CD4-positive, alpha-beta T cell (primary cell): ENCODE measurements at regions of chr9 and their contacts with region 1.

Region 1: DNA sequence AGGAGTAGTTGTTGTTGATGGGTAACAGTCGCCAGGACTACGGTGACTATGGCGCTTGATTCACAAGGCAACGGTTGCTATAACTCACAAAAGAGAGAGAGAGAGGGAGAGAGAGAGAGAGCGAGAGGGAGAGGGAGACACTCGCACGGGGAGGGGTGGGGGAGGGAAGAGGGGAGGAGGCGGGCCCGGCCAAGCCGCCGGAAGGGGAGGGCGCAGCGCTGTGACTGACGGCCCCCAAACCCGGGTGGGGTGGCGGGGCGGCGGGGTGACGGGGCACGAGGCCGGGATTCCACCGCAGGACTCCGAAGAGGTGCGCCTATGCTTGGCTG is at the start of gene RFX3:
- DNase-seq: peak; percentile 88 to 98 (median 92)
- ATAC-seq: peak; percentile 55
- H3K4me3 ChIP-seq: peak within 1 kb of the TSS; percentile 82
- H3K4me3 Mint-ChIP-seq: peak within 1 kb of the TSS; percentile 91
- H3K27ac ChIP-seq: peak within 1 kb of the TSS; percentile 100
- H3K27ac Mint-ChIP-seq: peak within 1 kb of the TSS; percentile 99
- H3K4me1 ChIP-seq: peaks cover 24% of the 10 kb centered on the region
- H3K4me1 Mint-ChIP-seq: peaks cover 74% of the 10 kb centered on the region
- H3K27me3 ChIP-seq: no peaks in the 10 kb centered on the region
- H3K27me3 Mint-ChIP-seq: peaks cover 5% of the 10 kb centered on the region
- CTCF ChIP-seq: no peak
- total RNA-seq, gene RFX3: 22.9 to 24.8 TPM

Region 2: DNA sequence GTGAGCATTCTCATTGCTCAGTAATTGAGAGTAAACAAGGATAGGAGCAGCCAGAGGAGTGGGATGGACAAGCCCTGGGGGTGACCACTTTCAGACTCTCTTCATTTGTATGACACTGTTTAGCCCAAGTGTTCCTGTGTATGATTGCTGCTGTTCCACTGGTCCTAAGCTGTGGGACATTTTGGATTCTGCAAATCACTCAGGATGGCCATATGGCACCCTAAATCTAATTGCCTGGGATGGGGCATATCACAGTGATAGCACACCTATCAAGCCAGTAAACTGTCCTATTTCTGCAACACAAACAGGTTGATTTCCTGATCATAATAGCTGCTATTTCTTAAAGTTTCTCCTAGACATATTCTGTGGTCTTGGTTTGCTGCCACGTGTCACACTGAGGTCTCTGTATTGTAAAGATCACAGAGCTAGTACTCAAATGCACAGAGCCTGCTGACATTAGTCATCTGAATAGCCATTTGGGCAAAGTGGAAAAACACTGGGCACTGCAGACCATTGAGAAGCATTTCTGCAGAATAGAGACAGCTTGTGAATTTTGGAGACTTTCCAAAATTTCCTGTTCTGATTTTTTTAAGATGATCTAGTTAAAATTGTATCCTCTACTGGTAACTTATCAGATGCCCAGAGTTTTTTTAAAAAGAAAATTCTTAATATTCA is 320.2 kb before region 1 on chr9:
- CTCF ChIA-PET with region 1: no interaction called
- POLR2A ChIA-PET with region 1: no interaction called
- intact Hi-C with region 1: no loop called
- DNase-seq: no peak
- ATAC-seq: no peak
- H3K4me3 ChIP-seq: no peak overlapping the region
- H3K4me3 Mint-ChIP-seq: no peak overlapping the region
- H3K27ac ChIP-seq: no peak overlapping the region
- H3K27ac Mint-ChIP-seq: no peak overlapping the region
- H3K4me1 ChIP-seq: no peaks in the 10 kb centered on the region
- H3K4me1 Mint-ChIP-seq: no peaks in the 10 kb centered on the region
- H3K27me3 ChIP-seq: no peaks in the 10 kb centered on the region
- H3K27me3 Mint-ChIP-seq: peaks cover 10% of the 10 kb centered on the region
- CTCF ChIP-seq: no peak

Region 3: GRCh38 chr9:3441197-3441816 is 84.5 kb before region 1 on chr9:
- CTCF ChIA-PET with region 1: interaction called, 5 read pairs
- POLR2A ChIA-PET with region 1: interaction called, 11 read pairs
- intact Hi-C with region 1: no loop called
- DNase-seq: peak in 13 of 14 experiments; percentile 7 to 72 (median 29)
- ATAC-seq: peak; percentile 88
- H3K4me3 ChIP-seq: no peak overlapping the region
- H3K4me3 Mint-ChIP-seq: no peak overlapping the region
- H3K27ac ChIP-seq: no peak overlapping the region
- H3K27ac Mint-ChIP-seq: no peak overlapping the region
- H3K4me1 ChIP-seq: no peaks in the 10 kb centered on the region
- H3K4me1 Mint-ChIP-seq: peaks cover 12% of the 10 kb centered on the region
- H3K27me3 ChIP-seq: no peaks in the 10 kb centered on the region
- H3K27me3 Mint-ChIP-seq: no peaks in the 10 kb centered on the region
- CTCF ChIP-seq: peak; percentile 62

Region 4: DNA sequence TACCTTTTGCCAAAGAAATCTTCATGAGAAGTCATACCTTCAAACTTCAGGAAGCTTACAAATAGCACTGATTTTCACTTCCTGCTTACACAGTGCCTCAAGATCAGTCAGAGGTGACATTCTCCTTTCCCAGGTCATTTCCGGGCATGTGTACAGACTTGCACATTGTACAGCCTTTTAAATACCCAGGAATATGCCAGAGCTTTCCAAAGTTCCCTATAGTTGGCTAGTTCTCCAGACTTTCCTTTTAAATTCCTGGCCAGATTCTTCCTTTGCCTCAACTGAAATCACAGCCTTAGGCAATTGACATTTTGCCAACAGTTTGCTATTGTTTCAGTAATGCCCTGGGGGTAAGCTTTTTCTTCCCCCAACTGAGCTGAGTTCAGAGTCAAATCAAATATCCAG is 47.2 kb before region 1 on chr9:
- CTCF ChIA-PET with region 1: interaction called, 5 read pairs
- POLR2A ChIA-PET with region 1: interaction called, 115 read pairs
- intact Hi-C with region 1: loop called (anchors 1 to 5 kb)
- DNase-seq: peak in 4 of 14 experiments; percentile 24 to 78 (median 52)
- ATAC-seq: peak; percentile 75
- H3K4me3 ChIP-seq: no peak overlapping the region
- H3K4me3 Mint-ChIP-seq: peak overlapping the region; percentile 85
- H3K27ac ChIP-seq: peak overlapping the region; percentile 14 to 63
- H3K27ac Mint-ChIP-seq: peak overlapping the region; percentile 88
- H3K4me1 ChIP-seq: peaks cover 10% of the 10 kb centered on the region
- H3K4me1 Mint-ChIP-seq: peaks cover 73% of the 10 kb centered on the region
- H3K27me3 ChIP-seq: no peaks in the 10 kb centered on the region
- H3K27me3 Mint-ChIP-seq: no peaks in the 10 kb centered on the region
- CTCF ChIP-seq: no peak

Region 5: DNA sequence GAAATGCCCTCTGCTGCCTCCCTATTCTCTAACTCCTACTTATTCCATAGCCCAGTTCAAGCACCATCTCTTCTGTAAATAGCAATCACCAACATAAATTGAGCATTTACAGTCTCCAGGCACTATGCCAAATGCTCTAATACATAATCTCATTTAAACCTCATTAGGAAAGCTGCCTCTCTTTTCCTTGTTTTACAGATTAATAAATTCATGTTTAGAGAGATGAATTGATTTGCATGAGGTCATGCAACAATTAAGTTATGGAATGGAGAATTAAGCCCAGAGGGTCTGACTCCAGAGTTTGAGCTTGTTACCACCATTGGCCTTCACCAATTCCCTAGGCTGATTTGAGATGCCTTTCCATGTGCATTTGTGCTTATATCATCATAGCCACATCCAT is 23.4 kb after region 1 on chr9:
- CTCF ChIA-PET with region 1: no interaction called
- POLR2A ChIA-PET with region 1: interaction called, 21 read pairs
- intact Hi-C with region 1: no loop called
- DNase-seq: no peak
- ATAC-seq: no peak
- H3K4me3 ChIP-seq: no peak overlapping the region
- H3K4me3 Mint-ChIP-seq: no peak overlapping the region
- H3K27ac ChIP-seq: no peak overlapping the region
- H3K27ac Mint-ChIP-seq: no peak overlapping the region
- H3K4me1 ChIP-seq: no peaks in the 10 kb centered on the region
- H3K4me1 Mint-ChIP-seq: no peaks in the 10 kb centered on the region
- H3K27me3 ChIP-seq: no peaks in the 10 kb centered on the region
- H3K27me3 Mint-ChIP-seq: no peaks in the 10 kb centered on the region
- CTCF ChIP-seq: no peak

Region 6: DNA sequence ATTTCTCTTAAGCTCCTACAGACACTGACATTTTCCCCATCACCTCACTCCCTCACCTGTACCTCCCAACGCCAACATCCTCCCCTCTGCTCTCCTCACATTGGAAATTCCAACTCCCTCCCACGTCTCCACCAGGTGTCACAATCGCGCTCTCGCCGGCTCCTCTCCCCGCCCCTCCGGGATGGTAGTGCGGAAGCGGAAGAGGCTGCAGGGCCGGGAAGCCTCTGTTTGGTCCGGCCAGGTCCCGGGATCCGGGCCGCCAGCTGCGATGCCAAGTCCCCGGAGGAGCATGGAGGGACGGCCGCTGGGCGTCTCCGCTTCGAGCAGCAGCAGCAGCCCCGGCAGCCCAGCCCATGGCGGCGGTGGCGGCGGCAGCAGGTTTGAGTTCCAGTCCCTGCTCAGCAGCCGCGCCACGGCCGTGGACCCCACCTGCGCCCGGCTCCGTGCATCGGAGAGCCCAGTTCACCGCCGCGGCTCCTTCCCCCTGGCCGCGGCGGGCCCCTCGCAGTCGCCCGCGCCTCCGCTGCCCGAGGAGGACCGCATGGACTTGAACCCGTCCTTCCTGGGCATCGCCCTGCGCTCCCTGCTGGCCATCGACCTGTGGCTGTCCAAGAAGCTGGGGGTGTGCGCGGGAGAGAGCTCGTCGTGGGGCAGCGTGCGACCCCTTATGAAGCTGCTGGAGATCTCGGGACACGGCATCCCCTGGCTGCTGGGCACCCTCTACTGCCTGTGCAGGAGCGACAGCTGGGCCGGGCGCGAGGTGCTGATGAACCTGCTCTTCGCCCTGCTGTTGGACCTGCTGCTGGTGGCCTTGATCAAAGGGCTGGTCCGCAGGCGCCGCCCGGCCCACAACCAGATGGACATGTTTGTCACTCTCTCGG is 1136.5 kb after region 1 on chr9 and contains the start of gene PLPP6:
- CTCF ChIA-PET with region 1: no interaction called
- POLR2A ChIA-PET with region 1: interaction called, 15 read pairs
- intact Hi-C with region 1: loop called in 1 of 2 experiments (anchors 10 kb)
- DNase-seq: peak; percentile 48 to 91 (median 69)
- ATAC-seq: peak; percentile 75
- H3K4me3 ChIP-seq: peak within 1 kb of the TSS; percentile 81
- H3K4me3 Mint-ChIP-seq: peak within 1 kb of the TSS; percentile 97
- H3K27ac ChIP-seq: peak within 1 kb of the TSS; percentile 70 to 72
- H3K27ac Mint-ChIP-seq: peak within 1 kb of the TSS; percentile 88
- H3K4me1 ChIP-seq: peaks cover 45% of the 10 kb centered on the region
- H3K4me1 Mint-ChIP-seq: peaks cover 58% of the 10 kb centered on the region
- H3K27me3 ChIP-seq: no peaks in the 10 kb centered on the region
- H3K27me3 Mint-ChIP-seq: no peaks in the 10 kb centered on the region
- CTCF ChIP-seq: peak; percentile 66
- total RNA-seq, gene PLPP6: 8.9 to 10.5 TPM

Region 7: GRCh38 chr9:4792572-4793458 is 1267.0 kb after region 1 on chr9 and contains the start of gene RCL1:
- CTCF ChIA-PET with region 1: no interaction called
- POLR2A ChIA-PET with region 1: interaction called, 20 read pairs
- intact Hi-C with region 1: loop called (anchors 5 kb)
- DNase-seq: peak; percentile 89 to 98 (median 94)
- ATAC-seq: peak; percentile 89
- H3K4me3 ChIP-seq: peak within 1 kb of the TSS; percentile 87
- H3K4me3 Mint-ChIP-seq: peak within 1 kb of the TSS; percentile 97
- H3K27ac ChIP-seq: peak within 1 kb of the TSS; percentile 83 to 87
- H3K27ac Mint-ChIP-seq: peak within 1 kb of the TSS; percentile 92
- H3K4me1 ChIP-seq: peaks cover 25% of the 10 kb centered on the region
- H3K4me1 Mint-ChIP-seq: peaks cover 45% of the 10 kb centered on the region
- H3K27me3 ChIP-seq: no peaks in the 10 kb centered on the region
- H3K27me3 Mint-ChIP-seq: no peaks in the 10 kb centered on the region
- CTCF ChIP-seq: no peak
- total RNA-seq, gene RCL1: 33.8 to 35.5 TPM